ENCODE measurements at regions of chr6 and their contacts with region 1.

Region 1: GRCh38 chr6:154928325-154928922 is 66.7 kb upstream of the TIAM2 start:
- DNase-seq: peak; percentile 84
- ATAC-seq: peak; percentile 77
- H3K4me3 Mint-ChIP-seq: no peak overlapping the region
- H3K27ac Mint-ChIP-seq: no peak overlapping the region
- H3K4me1 Mint-ChIP-seq: peaks cover 5% of the 10 kb centered on the region
- H3K27me3 Mint-ChIP-seq: no peaks in the 10 kb centered on the region
- CTCF ChIP-seq: peak; percentile 87

Region 2: DNA sequence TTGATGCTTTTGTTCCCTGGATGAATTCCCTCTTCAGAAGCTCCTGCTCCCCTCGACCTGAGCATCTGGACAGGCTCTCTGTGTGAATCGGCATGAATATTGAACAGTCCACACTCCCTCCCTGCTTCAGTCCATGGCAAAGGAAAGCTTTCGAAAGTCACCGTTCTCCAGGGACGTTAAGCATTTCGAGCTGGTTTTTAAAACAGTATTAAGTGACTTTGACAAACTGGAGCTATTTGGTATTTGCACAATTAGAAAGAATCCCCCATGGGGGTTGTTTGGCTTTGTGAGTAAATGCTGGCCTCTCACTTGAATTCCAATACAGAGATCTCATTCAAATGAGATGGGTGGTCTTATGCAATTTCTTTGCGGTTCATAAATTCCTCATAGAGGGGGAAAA is 18.6 kb before region 1 on chr6:
- CTCF ChIA-PET with region 1: interaction called, 23 read pairs
- POLR2A ChIA-PET with region 1: no interaction called
- intact Hi-C with region 1: no loop called
- DNase-seq: no peak
- ATAC-seq: no peak
- H3K4me3 Mint-ChIP-seq: no peak overlapping the region
- H3K27ac Mint-ChIP-seq: no peak overlapping the region
- H3K4me1 Mint-ChIP-seq: peaks cover 8% of the 10 kb centered on the region
- H3K27me3 Mint-ChIP-seq: no peaks in the 10 kb centered on the region
- CTCF ChIP-seq: no peak

Region 3: DNA sequence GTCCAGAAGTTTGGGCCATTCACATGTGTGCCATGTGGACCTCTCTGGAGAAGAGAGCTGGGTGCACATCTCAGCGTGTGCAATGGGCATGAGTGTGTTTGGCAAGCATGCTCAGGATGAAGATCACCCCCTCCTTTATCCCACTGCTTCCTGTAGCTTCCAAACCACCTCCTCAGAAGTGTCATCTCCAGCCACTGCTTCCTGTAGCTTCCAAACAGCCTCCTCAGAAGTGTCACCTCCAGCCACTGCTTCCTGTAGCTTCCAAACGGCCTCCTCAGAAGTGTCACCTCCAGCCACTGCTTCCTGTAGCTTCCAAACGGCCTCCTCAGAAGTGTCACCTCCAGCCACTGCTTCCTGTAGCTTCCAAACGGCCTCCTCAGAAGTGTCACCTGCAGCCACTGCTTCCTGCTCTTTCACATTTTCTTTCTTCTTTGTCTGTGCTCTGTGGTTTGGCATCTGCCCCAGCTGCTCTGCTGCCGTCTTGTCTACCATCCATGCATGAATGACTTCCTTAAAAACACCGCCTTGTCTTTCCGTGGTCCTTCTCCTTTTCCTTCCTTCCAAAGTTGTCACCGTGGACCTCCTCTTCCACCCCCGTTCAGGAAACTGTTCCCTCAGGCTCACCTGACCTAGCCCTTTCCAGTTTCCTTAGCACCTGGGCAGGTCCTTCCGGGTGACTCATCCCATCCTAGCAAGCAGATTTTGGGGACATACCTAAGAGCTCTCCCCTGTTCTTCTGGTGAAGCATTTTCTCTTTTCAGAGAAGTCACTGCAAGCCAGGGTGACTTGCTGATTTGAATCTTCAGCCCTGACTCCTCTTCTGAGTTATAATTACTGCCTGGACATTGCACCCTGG is 23.1 kb after region 1 on chr6:
- CTCF ChIA-PET with region 1: interaction called, 21 read pairs
- POLR2A ChIA-PET with region 1: no interaction called
- intact Hi-C with region 1: no loop called
- DNase-seq: peak; percentile 51
- ATAC-seq: peak; percentile 81
- H3K4me3 Mint-ChIP-seq: no peak overlapping the region
- H3K27ac Mint-ChIP-seq: peak overlapping the region; percentile 56
- H3K4me1 Mint-ChIP-seq: peaks cover 24% of the 10 kb centered on the region
- H3K27me3 Mint-ChIP-seq: no peaks in the 10 kb centered on the region
- CTCF ChIP-seq: no peak

Region 4: DNA sequence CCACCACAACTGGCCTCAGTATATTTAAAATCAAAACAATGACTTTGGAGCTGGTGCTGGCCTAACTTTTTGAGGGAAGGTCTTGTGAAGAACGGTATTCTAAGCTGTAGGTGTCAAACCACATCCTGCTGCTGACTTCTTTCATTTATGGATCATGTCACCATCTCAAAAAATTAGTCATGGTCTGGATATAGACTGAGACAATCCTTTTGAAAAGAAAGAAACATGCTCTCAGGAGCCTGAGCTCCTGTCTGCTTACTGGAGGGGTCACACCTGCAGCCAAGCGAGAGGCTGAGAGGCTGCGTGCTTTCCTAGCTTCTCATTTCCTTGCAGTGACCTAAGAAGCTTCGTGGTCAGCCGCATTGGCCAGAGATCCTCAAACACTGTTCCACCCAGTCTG is 121.9 kb after region 1 on chr6:
- CTCF ChIA-PET with region 1: no interaction called
- POLR2A ChIA-PET with region 1: no interaction called
- intact Hi-C with region 1: no loop called
- DNase-seq: peak; percentile 72
- ATAC-seq: peak; percentile 97
- H3K4me3 Mint-ChIP-seq: no peak overlapping the region
- H3K27ac Mint-ChIP-seq: peak overlapping the region; percentile 88
- H3K4me1 Mint-ChIP-seq: peaks cover 19% of the 10 kb centered on the region
- H3K27me3 Mint-ChIP-seq: peaks cover 8% of the 10 kb centered on the region
- CTCF ChIP-seq: no peak

Region 5: DNA sequence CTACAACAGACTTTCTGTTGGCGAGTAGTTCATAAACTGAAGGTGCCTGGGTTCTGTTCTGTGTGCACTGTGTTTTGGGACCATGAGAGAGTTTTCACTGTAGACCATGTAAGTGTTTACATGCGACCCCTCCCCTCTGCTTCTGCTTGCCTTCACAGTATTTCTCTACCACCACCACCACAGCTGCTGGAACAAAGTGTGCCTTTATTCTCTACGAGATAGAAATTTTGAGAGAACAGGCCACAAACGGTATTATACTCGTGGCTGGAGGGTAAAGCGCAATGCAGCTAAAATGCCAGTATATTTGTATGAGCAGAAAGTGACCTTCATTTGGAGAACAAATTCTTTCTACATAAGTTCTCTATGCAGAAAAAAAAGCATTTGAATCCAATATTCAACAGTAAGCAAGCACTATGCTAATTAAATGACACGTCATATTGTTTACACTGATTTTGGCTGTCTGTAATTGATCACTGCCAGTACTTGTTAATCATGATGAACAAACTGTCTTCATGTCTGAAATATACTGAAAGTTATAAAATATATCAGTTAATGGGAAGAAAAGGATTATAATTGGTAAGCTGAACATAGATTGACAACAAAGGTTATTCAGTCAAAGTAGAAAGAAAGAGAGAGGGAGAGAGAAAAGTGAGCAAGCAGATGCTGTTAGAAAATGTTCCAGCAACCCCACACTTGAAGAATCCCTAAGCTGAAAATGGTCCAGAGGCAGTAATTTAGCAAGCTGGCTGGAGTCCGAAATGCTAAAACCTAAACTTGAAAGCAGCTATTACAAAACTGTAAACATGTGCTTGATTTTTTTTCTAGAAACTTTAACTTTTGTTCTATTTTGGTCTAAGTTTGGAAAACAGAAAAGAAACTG is 344.2 kb after region 1 on chr6:
- CTCF ChIA-PET with region 1: interaction called, 10 read pairs
- POLR2A ChIA-PET with region 1: no interaction called
- intact Hi-C with region 1: no loop called
- DNase-seq: no peak
- ATAC-seq: no peak
- H3K4me3 Mint-ChIP-seq: no peak overlapping the region
- H3K27ac Mint-ChIP-seq: peak overlapping the region; percentile 16
- H3K4me1 Mint-ChIP-seq: peaks cover 10% of the 10 kb centered on the region
- H3K27me3 Mint-ChIP-seq: no peaks in the 10 kb centered on the region
- CTCF ChIP-seq: no peak